ENCODE measurements at regions of chr21 and their contacts with region 1.

Region 1: GRCh38 chr21:34091607-34092006 is 18.2 kb downstream of the MRPS6 start:
- DNase-seq: no peak
- ATAC-seq: no peak
- H3K4me3 ChIP-seq: no peak overlapping the region
- H3K27ac ChIP-seq: no peak overlapping the region
- H3K4me1 ChIP-seq: peaks cover 12% of the 10 kb centered on the region
- H3K27me3 ChIP-seq: no peaks in the 10 kb centered on the region
- CTCF ChIP-seq: no peak
- EP300 ChIP-seq: no peak
- POLR2A ChIP-seq: no peak
- RAD21 ChIP-seq: no peak

Region 2: DNA sequence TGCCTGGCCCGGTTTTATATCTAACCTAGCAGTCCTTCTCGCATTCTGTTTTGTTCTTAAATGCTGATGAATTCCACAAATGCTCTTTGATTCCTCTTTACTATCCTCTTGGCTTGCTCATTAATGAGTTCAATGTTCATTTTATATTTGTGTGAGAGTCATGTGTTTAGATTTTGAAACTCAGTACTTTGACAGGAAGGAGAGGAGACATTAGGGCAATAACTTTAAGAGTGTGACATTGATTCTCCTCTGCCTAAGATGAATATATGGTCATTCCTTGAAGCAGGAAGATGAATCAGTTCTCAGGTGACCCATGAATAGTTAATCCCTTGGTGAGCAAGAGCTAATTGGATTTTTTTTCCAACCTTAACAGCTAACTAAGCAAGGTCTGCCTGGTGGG is 65.9 kb after region 1 on chr21:
- CTCF ChIA-PET with region 1: no interaction called
- POLR2A ChIA-PET with region 1: no interaction called
- in situ Hi-C with region 1: loop called (anchors 10 kb)
- intact Hi-C with region 1: no loop called
- DNase-seq: no peak
- ATAC-seq: no peak
- H3K4me3 ChIP-seq: no peak overlapping the region
- H3K27ac ChIP-seq: no peak overlapping the region
- H3K4me1 ChIP-seq: peaks cover 11% of the 10 kb centered on the region
- H3K27me3 ChIP-seq: no peaks in the 10 kb centered on the region
- CTCF ChIP-seq: no peak
- EP300 ChIP-seq: no peak
- POLR2A ChIP-seq: no peak
- RAD21 ChIP-seq: no peak